ENCODE measurements at regions of chr2 and their contacts with region 1.

Region 1: DNA sequence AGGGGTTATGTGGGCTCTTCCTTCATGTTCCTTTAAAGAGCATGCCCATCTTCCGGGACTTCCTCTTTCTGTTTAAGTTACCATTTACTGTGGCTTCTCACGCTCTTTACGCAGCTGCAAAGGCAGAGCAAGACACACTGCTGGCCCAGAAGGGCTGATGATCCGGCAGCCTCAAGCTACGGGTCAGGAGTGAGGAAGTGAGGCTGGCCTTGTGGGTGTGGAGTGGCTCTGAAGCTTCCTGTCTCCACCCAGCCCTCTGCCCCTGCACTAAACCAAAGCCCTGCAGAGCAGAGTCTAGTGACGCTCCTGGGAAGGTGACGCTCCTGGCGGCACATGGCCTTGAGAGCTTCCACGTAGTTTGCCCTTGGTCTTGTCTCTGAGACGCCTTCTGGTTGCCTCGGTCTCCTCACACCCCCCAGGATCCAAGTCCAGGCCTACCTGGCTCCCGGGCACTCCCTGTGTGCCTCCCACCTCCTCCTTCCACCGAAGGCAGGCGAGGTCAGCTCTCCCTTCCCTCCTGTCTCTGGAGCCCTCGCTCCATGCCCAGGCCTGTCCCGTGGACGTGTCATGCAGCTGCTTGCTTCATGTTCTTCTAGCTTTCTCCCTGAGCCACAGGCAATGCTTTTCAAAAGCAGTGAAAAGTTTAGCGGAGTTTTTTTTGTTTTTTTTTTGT is 50.3 kb downstream of the ARL4C start:
- DNase-seq: peak; percentile 52
- H3K4me3 ChIP-seq: no peak overlapping the region
- H3K27ac ChIP-seq: peak overlapping the region; percentile 2
- H3K4me1 ChIP-seq: peaks cover 26% of the 10 kb centered on the region
- H3K27me3 ChIP-seq: no peaks in the 10 kb centered on the region
- CTCF ChIP-seq: no peak
- POLR2A ChIP-seq: no peak

Region 2: GRCh38 chr2:234335661-234336228 is 110.8 kb before region 1 on chr2:
- CTCF ChIA-PET with region 1: no interaction called
- POLR2A ChIA-PET with region 1: no interaction called
- dilution Hi-C with region 1: no loop called
- intact Hi-C with region 1: no loop called
- DNase-seq: peak; percentile 13
- H3K4me3 ChIP-seq: no peak overlapping the region
- H3K27ac ChIP-seq: no peak overlapping the region
- H3K4me1 ChIP-seq: no peaks in the 10 kb centered on the region
- H3K27me3 ChIP-seq: no peaks in the 10 kb centered on the region
- CTCF ChIP-seq: no peak
- POLR2A ChIP-seq: no peak

Region 3: DNA sequence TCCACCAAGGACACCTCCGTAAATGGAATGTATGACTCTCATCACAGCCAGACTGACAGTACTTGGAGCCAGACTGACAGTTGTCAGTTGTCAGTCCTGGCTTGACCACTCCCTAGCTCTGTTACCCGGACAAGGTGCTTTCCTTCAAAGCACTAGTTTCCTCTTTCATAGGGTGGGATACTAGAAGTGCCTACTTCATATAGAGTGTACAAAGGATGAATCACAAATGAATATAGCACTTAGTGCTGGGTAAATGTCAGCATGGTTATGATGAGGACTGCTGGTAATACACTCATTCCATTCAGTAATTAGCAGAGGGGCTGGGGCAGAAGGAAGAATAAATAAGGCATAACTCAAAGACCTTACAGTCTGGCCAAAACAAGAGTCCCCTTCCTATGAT is 41.1 kb before region 1 on chr2:
- CTCF ChIA-PET with region 1: interaction called, 3 read pairs
- POLR2A ChIA-PET with region 1: no interaction called
- dilution Hi-C with region 1: no loop called
- intact Hi-C with region 1: loop called (anchors 2 kb)
- DNase-seq: no peak
- H3K4me3 ChIP-seq: no peak overlapping the region
- H3K27ac ChIP-seq: peak overlapping the region; percentile 4
- H3K4me1 ChIP-seq: peaks cover 14% of the 10 kb centered on the region
- H3K27me3 ChIP-seq: peaks cover 0 to under 1% of the 10 kb centered on the region in 2 experiments
- CTCF ChIP-seq: no peak
- POLR2A ChIP-seq: no peak

Region 4: GRCh38 chr2:234494361-234495250 is 48.1 kb after region 1 on chr2:
- CTCF ChIA-PET with region 1: interaction called, 5 read pairs
- POLR2A ChIA-PET with region 1: no interaction called
- dilution Hi-C with region 1: no loop called
- intact Hi-C with region 1: loop called (anchors 2 kb)
- DNase-seq: peak; percentile 46
- H3K4me3 ChIP-seq: peak overlapping the region in 2 of 3 experiments; percentile 47 to 69
- H3K27ac ChIP-seq: no peak overlapping the region
- H3K4me1 ChIP-seq: peaks cover 16% of the 10 kb centered on the region
- H3K27me3 ChIP-seq: no peaks in the 10 kb centered on the region
- CTCF ChIP-seq: no peak
- POLR2A ChIP-seq: no peak

Region 5: GRCh38 chr2:234725528-234726264 is 279.2 kb after region 1 on chr2:
- CTCF ChIA-PET with region 1: no interaction called
- POLR2A ChIA-PET with region 1: no interaction called
- dilution Hi-C with region 1: no loop called
- intact Hi-C with region 1: no loop called
- DNase-seq: no peak
- H3K4me3 ChIP-seq: no peak overlapping the region
- H3K27ac ChIP-seq: no peak overlapping the region
- H3K4me1 ChIP-seq: no peaks in the 10 kb centered on the region
- H3K27me3 ChIP-seq: peaks cover 0 to 2% of the 10 kb centered on the region in 2 experiments
- CTCF ChIP-seq: no peak
- POLR2A ChIP-seq: no peak

Measured in endothelial cell of umbilical vein (primary cell).